ENCODE measurements at regions of chr16 and their contacts with region 1.

Region 1: GRCh38 chr16:4339909-4340308 is 11.2 kb downstream of the PAM16 start:
- DNase-seq: peak; percentile 88
- H3K4me3 ChIP-seq: no peak overlapping the region
- H3K27ac ChIP-seq: peak overlapping the region in 1 of 2 experiments; percentile 60; a peak in 1 of 4 replicates
- H3K4me1 ChIP-seq: peaks cover 0 to 21% of the 10 kb centered on the region in 2 experiments; a peak in 1 of 4 replicates
- H3K27me3 ChIP-seq: no peaks in the 10 kb centered on the region
- CTCF ChIP-seq: no peak
- EP300 ChIP-seq: no peak
- RAD21 ChIP-seq: peak; percentile 40; the same call in 1 of the 2 replicates

Region 2: GRCh38 chr16:4350787-4351659 is 11.1 kb after region 1 on chr16 and contains the start of gene PAM16:
- CTCF ChIA-PET with region 1: interaction called, 31 read pairs
- POLR2A ChIA-PET with region 1: interaction called, 5 read pairs
- DNase-seq: peak; percentile 99
- H3K4me3 ChIP-seq: peak within 1 kb of the TSS; percentile 67 to 85
- H3K27ac ChIP-seq: peak within 1 kb of the TSS; percentile 59 to 83
- H3K4me1 ChIP-seq: peaks cover 3 to 10% of the 10 kb centered on the region in 2 experiments; a peak in 3 of 4 replicates
- H3K27me3 ChIP-seq: no peaks in the 10 kb centered on the region
- CTCF ChIP-seq: 0 out of 2 replicates have a peak, but pooled peaks have one; percentile 20
- EP300 ChIP-seq: no peak
- RAD21 ChIP-seq: no peak
- polyA plus RNA-seq, gene PAM16: 96.3 and 96.4 TPM in 2 replicates

Region 3: GRCh38 chr16:4586291-4586690 is 246.4 kb after region 1 on chr16:
- CTCF ChIA-PET with region 1: no interaction called
- POLR2A ChIA-PET with region 1: no interaction called
- DNase-seq: no peak
- H3K4me3 ChIP-seq: no peak overlapping the region
- H3K27ac ChIP-seq: no peak overlapping the region
- H3K4me1 ChIP-seq: no peaks in the 10 kb centered on the region
- H3K27me3 ChIP-seq: no peaks in the 10 kb centered on the region
- CTCF ChIP-seq: no peak
- EP300 ChIP-seq: no peak
- RAD21 ChIP-seq: no peak